ENCODE measurements at regions of chrX and their contacts with region 1.

Region 1: DNA sequence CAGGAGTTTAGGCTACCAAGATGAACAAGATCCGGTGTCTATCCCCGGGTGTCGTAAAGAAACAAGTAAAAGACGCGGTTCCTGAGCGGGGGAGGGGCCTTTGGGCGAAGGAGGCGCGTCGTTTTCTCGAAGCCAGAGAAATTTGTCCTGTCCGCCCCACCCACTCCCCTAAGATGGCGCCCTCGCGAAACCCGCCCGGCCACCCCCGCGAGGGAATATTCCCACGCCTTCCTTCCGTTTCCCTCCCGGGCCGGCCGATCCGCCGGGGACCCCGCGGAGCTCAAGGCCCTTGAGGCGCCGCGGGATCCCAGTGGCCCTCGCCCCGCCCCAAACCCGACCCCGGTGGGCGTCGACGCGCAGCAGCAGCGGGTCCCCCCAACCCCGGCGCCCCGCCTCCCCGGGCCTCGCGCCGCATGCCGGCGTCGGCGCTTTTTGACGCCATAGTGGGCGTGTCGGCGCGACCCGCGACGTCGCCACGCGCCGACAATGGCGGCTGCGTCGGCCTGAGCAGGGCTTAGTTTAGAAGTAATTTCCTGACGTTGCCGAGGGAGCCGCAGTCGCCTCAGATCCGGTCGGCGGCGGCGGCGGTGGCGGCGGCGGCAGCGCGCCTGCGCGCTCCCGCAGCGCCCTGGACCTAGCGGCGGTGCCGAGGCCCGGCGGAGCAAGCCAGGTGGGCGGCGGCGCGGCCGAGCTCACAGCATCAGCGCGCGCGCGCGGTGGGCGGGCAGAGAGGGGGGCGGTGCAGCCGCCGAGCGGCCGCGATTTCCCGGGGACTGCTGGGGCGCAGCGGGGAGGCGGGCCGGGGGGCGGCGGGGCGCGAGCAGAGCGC is at the start of gene HTATSF1:
- DNase-seq: peak; percentile 84 to 87
- H3K4me3 ChIP-seq: peak within 1 kb of the TSS; percentile 93
- H3K27ac ChIP-seq: peak within 1 kb of the TSS; percentile 94
- H3K4me1 ChIP-seq: peaks cover 23% of the 10 kb centered on the region
- H3K27me3 ChIP-seq: no peaks in the 10 kb centered on the region
- CTCF ChIP-seq: no peak
- total RNA-seq, gene HTATSF1: 64.3 and 72.4 TPM in 2 replicates

Region 2: DNA sequence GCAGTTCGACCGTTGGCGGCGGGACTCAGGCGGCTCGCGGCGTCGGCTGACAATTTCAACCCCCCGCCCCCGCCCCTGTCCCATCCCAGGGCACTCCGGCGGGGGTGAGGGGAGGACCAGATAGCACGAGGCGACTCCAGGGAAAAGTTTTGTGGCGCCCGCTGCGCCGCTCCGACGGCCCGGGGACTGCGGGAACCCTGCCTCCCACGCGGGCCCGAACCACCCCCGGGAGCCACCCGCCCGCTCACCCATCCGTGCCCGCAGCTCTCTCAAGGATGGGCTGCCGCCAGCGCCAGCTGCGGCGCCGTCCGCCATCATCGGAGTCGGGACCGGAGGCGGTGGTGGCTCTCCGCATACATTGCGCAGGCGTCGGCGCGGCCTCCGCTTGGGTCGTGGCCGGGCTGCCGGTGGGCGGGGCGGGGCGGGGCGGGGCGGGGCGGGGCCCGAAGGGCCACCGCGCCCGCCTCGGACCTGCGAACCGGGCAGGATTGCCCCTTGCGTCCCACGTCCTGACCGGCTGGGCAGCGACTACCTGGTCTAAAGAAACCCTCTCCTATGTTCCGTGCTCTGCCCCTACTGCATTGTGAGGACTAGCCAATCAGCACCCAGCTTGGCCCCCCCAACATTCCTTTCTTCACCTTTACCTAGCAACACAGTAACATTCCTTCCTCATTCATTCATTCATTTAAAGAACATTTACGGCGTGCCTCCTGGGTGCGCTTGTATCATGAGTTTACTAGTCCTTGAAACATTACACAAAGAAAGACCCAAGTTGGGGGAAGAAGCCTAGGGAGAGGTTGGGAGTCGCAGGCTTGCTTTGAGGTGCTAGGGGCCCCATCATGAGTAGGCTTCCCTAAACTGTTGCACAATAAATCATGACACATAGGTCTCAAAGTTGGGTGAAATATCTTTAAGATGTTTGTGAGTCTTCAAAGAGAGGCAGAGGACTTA is 245.7 kb before region 1 on chrX and contains the start of gene MAP7D3:
- CTCF ChIA-PET with region 1: no interaction called
- POLR2A ChIA-PET with region 1: no interaction called
- intact Hi-C with region 1: loop called (anchors 2 kb)
- DNase-seq: peak; percentile 63 to 73
- H3K4me3 ChIP-seq: peak within 1 kb of the TSS; percentile 76
- H3K27ac ChIP-seq: peak within 1 kb of the TSS; percentile 47
- H3K4me1 ChIP-seq: peaks cover 17% of the 10 kb centered on the region
- H3K27me3 ChIP-seq: no peaks in the 10 kb centered on the region
- CTCF ChIP-seq: no peak
- total RNA-seq, gene MAP7D3: 14.6 and 19.0 TPM in 2 replicates

Region 3: GRCh38 chrX:136397001-136397400 is 100.0 kb before region 1 on chrX:
- CTCF ChIA-PET with region 1: no interaction called
- POLR2A ChIA-PET with region 1: no interaction called
- intact Hi-C with region 1: loop called (anchors 5 kb)
- DNase-seq: peak; percentile 14 to 86
- H3K4me3 ChIP-seq: no peak overlapping the region
- H3K27ac ChIP-seq: peak overlapping the region; percentile 32
- H3K4me1 ChIP-seq: peaks cover 33% of the 10 kb centered on the region
- H3K27me3 ChIP-seq: no peaks in the 10 kb centered on the region
- CTCF ChIP-seq: peak; percentile 53

Region 4: GRCh38 chrX:136531951-136532350 is 35.0 kb after region 1 on chrX and contains the start of gene VGLL1:
- CTCF ChIA-PET with region 1: no interaction called
- POLR2A ChIA-PET with region 1: interaction called, 6 read pairs
- intact Hi-C with region 1: loop called (anchors 1 kb)
- DNase-seq: peak; percentile 76 to 97
- H3K4me3 ChIP-seq: peak within 1 kb of the TSS; percentile 71
- H3K27ac ChIP-seq: peak within 1 kb of the TSS; percentile 95
- H3K4me1 ChIP-seq: peaks cover 73% of the 10 kb centered on the region
- H3K27me3 ChIP-seq: no peaks in the 10 kb centered on the region
- CTCF ChIP-seq: no peak
- total RNA-seq, gene VGLL1: 112 and 154 TPM in 2 replicates

Region 5: GRCh38 chrX:136694431-136695087 is 197.6 kb after region 1 on chrX:
- CTCF ChIA-PET with region 1: no interaction called
- POLR2A ChIA-PET with region 1: no interaction called
- intact Hi-C with region 1: loop called (anchors 5 kb)
- DNase-seq: peak in 1 of 2 experiments; percentile 57
- H3K4me3 ChIP-seq: no peak overlapping the region
- H3K27ac ChIP-seq: no peak overlapping the region
- H3K4me1 ChIP-seq: peaks cover 17% of the 10 kb centered on the region
- H3K27me3 ChIP-seq: no peaks in the 10 kb centered on the region
- CTCF ChIP-seq: peak; percentile 90

Measured in PC-9 (cell line).